Esophagus muscularis mucosa (tissue), 4 donors: ENCODE measurements at regions of chr12 and their contacts with region 1.

Region 1: GRCh38 chr12:53451661-53452158 is at the start of gene PCBP2:
- DNase-seq: peak; percentile 99
- H3K4me3 ChIP-seq: peak within 1 kb of the TSS; percentile 74 to 84 (median 82)
- H3K27ac ChIP-seq: peak within 1 kb of the TSS; percentile 95 to 98 (median 96)
- H3K4me1 ChIP-seq: peaks cover 18 to 30% (median 27%) of the 10 kb centered on the region in 4 donors
- H3K27me3 ChIP-seq: no peaks in the 10 kb centered on the region
- CTCF ChIP-seq: peak; percentile 76 to 97 (median 92)
- EP300 ChIP-seq: no peak
- POLR2A ChIP-seq: peak; percentile 30
- total RNA-seq, gene PCBP2: 275 to 374 (median 365) TPM

Region 2: GRCh38 chr12:53508534-53509199 is 57.0 kb after region 1 on chr12:
- intact Hi-C with region 1: loop called (anchors 5 kb)
- DNase-seq: peak; percentile 97
- H3K4me3 ChIP-seq: no peak overlapping the region
- H3K27ac ChIP-seq: peak overlapping the region in 1 of 4 donors; percentile 44
- H3K4me1 ChIP-seq: peaks cover 6 to 24% (median 12%) of the 10 kb centered on the region in 4 donors
- H3K27me3 ChIP-seq: no peaks in the 10 kb centered on the region
- CTCF ChIP-seq: peak; percentile 88 to 97 (median 92)
- EP300 ChIP-seq: no peak
- POLR2A ChIP-seq: no peak

Region 3: GRCh38 chr12:53659011-53659551 is 207.4 kb after region 1 on chr12:
- intact Hi-C with region 1: no loop called
- DNase-seq: no peak
- H3K4me3 ChIP-seq: peak overlapping the region; percentile 14 to 21 (median 18)
- H3K27ac ChIP-seq: peak overlapping the region; percentile 82 to 87 (median 84)
- H3K4me1 ChIP-seq: peaks cover 34 to 40% (median 35%) of the 10 kb centered on the region in 4 donors
- H3K27me3 ChIP-seq: no peaks in the 10 kb centered on the region
- CTCF ChIP-seq: no peak
- EP300 ChIP-seq: no peak
- POLR2A ChIP-seq: no peak